ENCODE measurements at regions of chrX and their contacts with region 1.

Region 1: GRCh38 chrX:130079824-130080406 is 30.4 kb downstream of the ELF4 start:
- DNase-seq: peak; percentile 49 to 60 (median 54)
- H3K4me3 ChIP-seq: no peak overlapping the region
- H3K4me3 Mint-ChIP-seq: no peak overlapping the region
- H3K27ac ChIP-seq: no peak overlapping the region
- H3K27ac Mint-ChIP-seq: peak overlapping the region in 5 of 7 donors; percentile 58 to 79 (median 73)
- H3K4me1 ChIP-seq: peaks cover 46 to 48% of the 10 kb centered on the region in 2 donors
- H3K4me1 Mint-ChIP-seq: peaks cover 44% of the 10 kb centered on the region
- H3K27me3 ChIP-seq: no peaks in the 10 kb centered on the region
- H3K27me3 Mint-ChIP-seq: peaks cover 0 to 5% (median 0%) of the 10 kb centered on the region in 3 donors
- CTCF ChIP-seq: peak; percentile 68

Region 2: DNA sequence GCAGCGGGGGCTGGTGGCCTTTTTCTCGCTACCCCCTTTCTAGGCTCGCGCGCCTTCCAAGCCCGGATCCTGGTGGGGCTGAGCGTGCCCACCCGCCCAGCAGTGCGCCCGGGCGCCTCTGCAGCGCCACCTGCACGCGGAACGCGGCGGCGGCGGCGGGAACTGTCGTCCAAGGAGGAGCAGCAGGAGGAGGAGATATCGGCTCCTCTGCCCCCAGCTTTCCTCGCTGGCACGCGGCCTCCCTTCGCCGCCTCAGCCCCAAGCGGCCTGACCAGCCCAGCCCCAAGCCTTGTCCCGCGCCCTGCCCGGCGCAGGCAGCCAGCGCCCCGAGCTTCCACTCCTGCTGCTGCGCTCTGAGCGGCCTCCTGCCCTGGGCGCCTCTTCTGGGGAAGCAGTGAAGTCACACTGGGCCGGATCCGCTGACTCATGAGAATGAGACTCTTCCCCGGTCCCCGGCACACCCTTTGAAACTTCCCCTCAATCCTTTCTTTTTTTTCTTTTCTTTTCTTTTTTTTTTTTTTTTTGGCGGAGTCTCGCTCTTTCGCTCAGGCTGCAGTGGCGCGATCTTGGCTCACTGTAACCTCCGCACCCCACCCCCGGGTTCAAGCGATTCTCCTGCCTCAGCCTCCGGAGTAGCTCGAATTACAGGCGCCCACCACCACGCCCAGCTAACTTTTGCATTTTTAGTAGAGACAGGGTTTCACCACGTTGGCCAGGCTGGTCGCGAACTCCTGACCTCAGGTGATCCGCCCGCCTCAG is 41.0 kb after region 1 on chrX:
- intact Hi-C with region 1: loop called (anchors 2 to 5 kb)
- DNase-seq: peak; percentile 71 to 82 (median 78)
- H3K4me3 ChIP-seq: peak overlapping the region; percentile 24 to 71 (median 39)
- H3K4me3 Mint-ChIP-seq: peak overlapping the region; percentile 79 to 84
- H3K27ac ChIP-seq: peak overlapping the region; percentile 62 to 77
- H3K27ac Mint-ChIP-seq: peak overlapping the region; percentile 78 to 96 (median 91)
- H3K4me1 ChIP-seq: peaks cover 18 to 44% of the 10 kb centered on the region in 2 donors
- H3K4me1 Mint-ChIP-seq: peaks cover 30% of the 10 kb centered on the region
- H3K27me3 ChIP-seq: no peaks in the 10 kb centered on the region
- H3K27me3 Mint-ChIP-seq: peaks cover 2 to 22% (median 3%) of the 10 kb centered on the region in 3 donors
- CTCF ChIP-seq: peak; percentile 80

Region 3: GRCh38 chrX:130165703-130166502 is 86.0 kb after region 1 on chrX and contains the start of gene AIFM1:
- intact Hi-C with region 1: loop called in 1 of 2 experiments (anchors 5 kb)
- DNase-seq: peak; percentile 92 to 95 (median 93)
- H3K4me3 ChIP-seq: peak within 1 kb of the TSS; percentile 72 to 79 (median 74)
- H3K4me3 Mint-ChIP-seq: peak within 1 kb of the TSS; percentile 91 to 93
- H3K27ac ChIP-seq: peak within 1 kb of the TSS; percentile 92 to 94
- H3K27ac Mint-ChIP-seq: peak within 1 kb of the TSS; percentile 90 to 96 (median 95)
- H3K4me1 ChIP-seq: peaks cover 18 to 23% of the 10 kb centered on the region in 2 donors
- H3K4me1 Mint-ChIP-seq: peaks cover 18% of the 10 kb centered on the region
- H3K27me3 ChIP-seq: no peaks in the 10 kb centered on the region
- H3K27me3 Mint-ChIP-seq: peaks cover 0 to 9% (median 0%) of the 10 kb centered on the region in 3 donors
- CTCF ChIP-seq: no peak
- polyA plus RNA-seq, gene AIFM1: 15.1 to 19.1 (median 18.6) TPM

Region 4: GRCh38 chrX:130190801-130191200 is 110.9 kb after region 1 on chrX:
- intact Hi-C with region 1: loop called (anchors 5 kb)
- DNase-seq: no peak
- H3K4me3 ChIP-seq: no peak overlapping the region
- H3K4me3 Mint-ChIP-seq: no peak overlapping the region
- H3K27ac ChIP-seq: no peak overlapping the region
- H3K27ac Mint-ChIP-seq: no peak overlapping the region
- H3K4me1 ChIP-seq: peaks cover 4 to 5% of the 10 kb centered on the region in 2 donors
- H3K4me1 Mint-ChIP-seq: peaks cover 3% of the 10 kb centered on the region
- H3K27me3 ChIP-seq: no peaks in the 10 kb centered on the region
- H3K27me3 Mint-ChIP-seq: peaks cover 0 to 4% (median 2%) of the 10 kb centered on the region in 3 donors
- CTCF ChIP-seq: no peak

Measured in CD14-positive monocyte (primary cell).